ENCODE measurements at regions of chr16 and their contacts with region 1.

Region 1: GRCh38 chr16:30628627-30629540 is 18.7 kb upstream of the ZNF689 start:
- DNase-seq: peak; percentile 92
- ATAC-seq: peak; percentile 92
- H3K4me3 Mint-ChIP-seq: peak overlapping the region; percentile 45
- H3K27ac Mint-ChIP-seq: peak overlapping the region; percentile 67
- H3K4me1 Mint-ChIP-seq: peaks cover 10% of the 10 kb centered on the region
- H3K27me3 Mint-ChIP-seq: no peaks in the 10 kb centered on the region

Region 2: DNA sequence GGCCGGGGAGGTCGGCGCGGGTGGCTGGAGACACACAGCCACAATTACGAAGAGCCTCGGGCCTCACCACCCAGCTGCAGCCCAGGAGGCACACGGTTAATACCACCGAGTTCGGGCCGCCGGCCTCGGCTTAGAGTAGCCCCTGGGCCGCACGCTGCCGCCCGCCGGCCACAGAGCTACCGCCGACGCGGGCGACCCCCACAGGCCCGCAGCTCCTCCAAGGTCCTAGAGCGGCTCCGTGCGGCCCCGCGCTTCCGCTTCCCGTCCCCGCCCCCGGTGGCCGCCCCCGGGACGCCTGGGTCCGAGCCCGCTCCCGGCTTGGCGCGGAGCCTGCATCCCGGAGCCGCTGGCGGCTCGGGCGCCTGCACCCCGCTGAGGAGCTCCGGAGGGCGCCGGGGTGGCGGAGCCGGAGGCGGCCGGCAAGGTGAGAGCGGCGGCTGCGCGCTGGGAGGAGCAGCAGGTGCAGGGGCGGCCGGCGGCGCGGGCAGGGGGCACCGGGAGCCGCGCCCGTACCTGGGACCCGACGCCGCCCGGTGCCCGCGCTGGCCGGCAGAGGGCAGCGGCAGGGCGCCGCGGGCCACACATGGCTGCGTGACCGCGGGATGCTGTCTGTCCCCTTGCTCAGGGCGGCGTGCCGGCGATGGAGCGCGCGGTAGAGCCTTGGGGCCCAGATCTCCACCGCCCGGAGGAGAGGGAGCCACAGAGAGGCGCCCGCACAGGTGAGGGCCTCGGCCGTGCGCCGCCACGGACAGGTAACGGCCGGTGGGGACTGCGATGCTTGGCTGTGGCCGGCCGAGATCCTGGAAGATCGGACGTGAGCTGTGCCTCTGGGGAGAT is 233.5 kb before region 1 on chr16 and contains the start of gene ZNF48:
- CTCF ChIA-PET with region 1: no interaction called
- POLR2A ChIA-PET with region 1: no interaction called
- DNase-seq: peak; percentile 53
- ATAC-seq: peak; percentile 77
- H3K4me3 Mint-ChIP-seq: peak within 1 kb of the TSS; percentile 91
- H3K27ac Mint-ChIP-seq: peak within 1 kb of the TSS; percentile 77
- H3K4me1 Mint-ChIP-seq: peaks cover 55% of the 10 kb centered on the region
- H3K27me3 Mint-ChIP-seq: no peaks in the 10 kb centered on the region
- total RNA-seq, gene ZNF48: 13.5 to 13.8 TPM

Region 3: GRCh38 chr16:30609926-30610839 is 18.7 kb before region 1 on chr16 and contains the start of gene ZNF689:
- CTCF ChIA-PET with region 1: interaction called, 50 read pairs
- POLR2A ChIA-PET with region 1: interaction called, 4 read pairs
- DNase-seq: peak; percentile 97
- ATAC-seq: peak; percentile 92
- H3K4me3 Mint-ChIP-seq: peak within 1 kb of the TSS; percentile 84
- H3K27ac Mint-ChIP-seq: peak within 1 kb of the TSS; percentile 96
- H3K4me1 Mint-ChIP-seq: peaks cover 19% of the 10 kb centered on the region
- H3K27me3 Mint-ChIP-seq: no peaks in the 10 kb centered on the region
- total RNA-seq, gene ZNF689: 12.0 to 13.4 TPM

Region 4: GRCh38 chr16:30615358-30616091 is 13.4 kb before region 1 on chr16:
- CTCF ChIA-PET with region 1: interaction called, 50 read pairs
- POLR2A ChIA-PET with region 1: interaction called, 4 read pairs
- DNase-seq: peak; percentile 83
- ATAC-seq: peak; percentile 68
- H3K4me3 Mint-ChIP-seq: no peak overlapping the region
- H3K27ac Mint-ChIP-seq: no peak overlapping the region
- H3K4me1 Mint-ChIP-seq: peaks cover 14% of the 10 kb centered on the region
- H3K27me3 Mint-ChIP-seq: peaks cover 13% of the 10 kb centered on the region

Region 5: DNA sequence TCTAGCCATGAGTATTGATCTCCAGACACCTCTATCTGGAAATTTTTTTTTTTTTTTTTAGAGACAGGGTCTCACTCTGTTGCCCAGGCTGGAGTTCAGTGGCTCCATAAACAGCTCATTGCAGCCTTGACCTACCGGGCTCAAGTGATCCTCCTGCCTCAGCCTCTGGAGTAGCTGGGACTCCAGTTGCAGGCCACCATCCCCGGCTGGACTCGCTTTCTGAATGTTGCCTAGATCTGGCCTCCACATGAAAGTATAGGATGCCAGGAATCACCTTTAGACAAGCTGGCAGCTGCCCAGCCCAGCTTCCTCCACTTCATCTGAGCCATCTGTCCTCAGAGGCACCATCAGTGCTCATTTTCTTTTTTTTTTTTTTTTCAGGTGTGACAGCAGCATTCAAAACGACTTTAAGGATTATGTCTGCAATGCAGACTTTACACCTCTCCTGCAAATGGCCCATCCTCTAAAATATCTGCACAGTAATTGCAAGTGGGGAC is 15.5 kb after region 1 on chr16:
- CTCF ChIA-PET with region 1: interaction called, 14 read pairs
- POLR2A ChIA-PET with region 1: interaction called, 5 read pairs
- DNase-seq: no peak
- ATAC-seq: no peak
- H3K4me3 Mint-ChIP-seq: no peak overlapping the region
- H3K27ac Mint-ChIP-seq: no peak overlapping the region
- H3K4me1 Mint-ChIP-seq: peaks cover 14% of the 10 kb centered on the region
- H3K27me3 Mint-ChIP-seq: peaks cover 5% of the 10 kb centered on the region

Region 6: GRCh38 chr16:30650369-30651123 is 21.7 kb after region 1 on chr16 and contains the start of gene PRR14:
- CTCF ChIA-PET with region 1: interaction called, 14 read pairs
- POLR2A ChIA-PET with region 1: interaction called, 5 read pairs
- DNase-seq: peak; percentile 100
- ATAC-seq: peak; percentile 86
- H3K4me3 Mint-ChIP-seq: peak within 1 kb of the TSS; percentile 91
- H3K27ac Mint-ChIP-seq: peak within 1 kb of the TSS; percentile 95
- H3K4me1 Mint-ChIP-seq: peaks cover 40% of the 10 kb centered on the region
- H3K27me3 Mint-ChIP-seq: peaks cover 1% of the 10 kb centered on the region
- total RNA-seq, gene PRR14: 87.6 to 91.4 TPM

Region 7: DNA sequence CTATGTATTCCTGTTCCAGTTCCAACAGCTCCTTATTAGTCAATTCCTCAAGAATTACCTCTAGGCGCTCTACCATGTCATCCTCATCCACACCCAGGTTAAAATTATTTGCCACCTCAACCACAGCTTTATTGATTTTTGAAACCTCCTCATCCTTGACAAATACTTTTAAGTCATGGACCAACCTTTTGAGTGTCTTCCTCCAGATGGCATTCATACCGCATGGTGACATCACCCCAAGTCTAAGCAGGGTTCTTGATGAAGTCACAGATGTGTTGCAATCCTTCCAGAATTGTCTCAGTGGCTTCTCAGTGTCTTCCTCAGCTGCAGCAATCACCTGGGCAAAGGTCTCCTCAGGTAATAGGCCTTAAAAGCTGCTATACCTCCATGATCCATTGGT is 224.9 kb after region 1 on chr16:
- CTCF ChIA-PET with region 1: no interaction called
- POLR2A ChIA-PET with region 1: no interaction called
- DNase-seq: no peak
- ATAC-seq: no peak
- H3K4me3 Mint-ChIP-seq: no peak overlapping the region
- H3K27ac Mint-ChIP-seq: no peak overlapping the region
- H3K4me1 Mint-ChIP-seq: peaks cover 3% of the 10 kb centered on the region
- H3K27me3 Mint-ChIP-seq: no peaks in the 10 kb centered on the region